Naive thymus-derived CD4-positive, alpha-beta T cell (primary cell): ENCODE measurements at regions of chr12 and their contacts with region 1.

Region 1: GRCh38 chr12:105107494-105108371 is at the start of gene WASHC4:
- DNase-seq: peak; percentile 87 to 97 (median 90)
- ATAC-seq: peak; percentile 99
- H3K4me3 ChIP-seq: peak within 1 kb of the TSS; percentile 68
- H3K4me3 Mint-ChIP-seq: peak within 1 kb of the TSS; percentile 89 to 99 (median 96)
- H3K27ac ChIP-seq: peak within 1 kb of the TSS; percentile 93
- H3K27ac Mint-ChIP-seq: peak within 1 kb of the TSS; percentile 77 to 96 (median 95)
- H3K4me1 ChIP-seq: peaks cover 13 to 16% of the 10 kb centered on the region in 2 donors
- H3K4me1 Mint-ChIP-seq: peaks cover 20 to 45% (median 38%) of the 10 kb centered on the region in 7 donors
- H3K27me3 ChIP-seq: no peaks in the 10 kb centered on the region
- H3K27me3 Mint-ChIP-seq: peaks cover 3 to 27% (median 22%) of the 10 kb centered on the region in 5 donors
- total RNA-seq, gene WASHC4: 43.2 to 76.8 (median 53.0) TPM

Region 2: GRCh38 chr12:103956516-103957027 is 1151.2 kb before region 1 on chr12:
- CTCF ChIA-PET with region 1: no interaction called
- POLR2A ChIA-PET with region 1: no interaction called
- intact Hi-C with region 1: loop called in 1 of 2 experiments (anchors 2 kb)
- DNase-seq: peak in 3 of 9 donors; percentile 4 to 7 (median 5)
- ATAC-seq: no peak
- H3K4me3 ChIP-seq: peak overlapping the region; percentile 91
- H3K4me3 Mint-ChIP-seq: peak overlapping the region; percentile 95 to 100 (median 99)
- H3K27ac ChIP-seq: peak overlapping the region; percentile 73
- H3K27ac Mint-ChIP-seq: peak overlapping the region; percentile 93 to 99 (median 98)
- H3K4me1 ChIP-seq: peaks cover 13 to 17% of the 10 kb centered on the region in 2 donors
- H3K4me1 Mint-ChIP-seq: peaks cover 25 to 58% (median 43%) of the 10 kb centered on the region in 7 donors
- H3K27me3 ChIP-seq: no peaks in the 10 kb centered on the region
- H3K27me3 Mint-ChIP-seq: no peaks in the 10 kb centered on the region

Region 3: GRCh38 chr12:104215638-104216297 is 892.0 kb before region 1 on chr12 and contains the start of gene TXNRD1:
- CTCF ChIA-PET with region 1: no interaction called
- POLR2A ChIA-PET with region 1: no interaction called
- intact Hi-C with region 1: loop called in 1 of 2 experiments (anchors 5 kb)
- DNase-seq: peak; percentile 70 to 84 (median 81)
- ATAC-seq: peak; percentile 97
- H3K4me3 ChIP-seq: peak within 1 kb of the TSS; percentile 69
- H3K4me3 Mint-ChIP-seq: peak within 1 kb of the TSS; percentile 79 to 89 (median 84)
- H3K27ac ChIP-seq: peak within 1 kb of the TSS; percentile 64
- H3K27ac Mint-ChIP-seq: peak within 1 kb of the TSS; percentile 64 to 86 (median 72)
- H3K4me1 ChIP-seq: peaks cover 0 to 5% of the 10 kb centered on the region in 2 donors
- H3K4me1 Mint-ChIP-seq: peaks cover 15 to 41% (median 26%) of the 10 kb centered on the region in 7 donors
- H3K27me3 ChIP-seq: no peaks in the 10 kb centered on the region
- H3K27me3 Mint-ChIP-seq: peaks cover 0 to 8% (median 0%) of the 10 kb centered on the region in 5 donors
- total RNA-seq, gene TXNRD1: 19.1 to 73.5 (median 41.7) TPM

Region 4: GRCh38 chr12:104462931-104463339 is 644.8 kb before region 1 on chr12:
- CTCF ChIA-PET with region 1: no interaction called
- POLR2A ChIA-PET with region 1: interaction called, 6 read pairs
- intact Hi-C with region 1: loop called (anchors 5 kb)
- DNase-seq: peak in 7 of 9 donors; percentile 41 to 68 (median 51)
- ATAC-seq: peak; percentile 71
- H3K4me3 ChIP-seq: peak overlapping the region; percentile 12
- H3K4me3 Mint-ChIP-seq: peak overlapping the region; percentile 68 to 90 (median 85)
- H3K27ac ChIP-seq: peak overlapping the region; percentile 68
- H3K27ac Mint-ChIP-seq: peak overlapping the region; percentile 63 to 98 (median 93)
- H3K4me1 ChIP-seq: peaks cover 76 to 77% of the 10 kb centered on the region in 2 donors
- H3K4me1 Mint-ChIP-seq: peaks cover 60 to 93% (median 78%) of the 10 kb centered on the region in 7 donors
- H3K27me3 ChIP-seq: no peaks in the 10 kb centered on the region
- H3K27me3 Mint-ChIP-seq: no peaks in the 10 kb centered on the region

Region 5: GRCh38 chr12:104958009-104958945 is 149.5 kb before region 1 on chr12 and contains the start of gene SLC41A2:
- CTCF ChIA-PET with region 1: no interaction called
- POLR2A ChIA-PET with region 1: no interaction called
- intact Hi-C with region 1: loop called in 1 of 2 experiments (anchors 1 kb)
- DNase-seq: peak; percentile 55 to 87 (median 74)
- ATAC-seq: peak; percentile 93
- H3K4me3 ChIP-seq: peak within 1 kb of the TSS; percentile 77
- H3K4me3 Mint-ChIP-seq: peak within 1 kb of the TSS; percentile 91 to 98 (median 96)
- H3K27ac ChIP-seq: peak within 1 kb of the TSS; percentile 59
- H3K27ac Mint-ChIP-seq: peak within 1 kb of the TSS; percentile 65 to 93 (median 89)
- H3K4me1 ChIP-seq: peaks cover 6 to 9% of the 10 kb centered on the region in 2 donors
- H3K4me1 Mint-ChIP-seq: peaks cover 8 to 29% (median 26%) of the 10 kb centered on the region in 7 donors
- H3K27me3 ChIP-seq: peaks cover 0 to 3% of the 10 kb centered on the region in 2 donors
- H3K27me3 Mint-ChIP-seq: peaks cover 5 to 49% (median 7%) of the 10 kb centered on the region in 5 donors
- total RNA-seq, gene SLC41A2: 2.0 to 12.7 (median 2.6) TPM

Region 6: GRCh38 chr12:105141320-105141918 is 33.7 kb after region 1 on chr12:
- CTCF ChIA-PET with region 1: no interaction called
- POLR2A ChIA-PET with region 1: no interaction called
- intact Hi-C with region 1: no loop called
- DNase-seq: no peak
- ATAC-seq: no peak
- H3K4me3 ChIP-seq: no peak overlapping the region
- H3K4me3 Mint-ChIP-seq: no peak overlapping the region
- H3K27ac ChIP-seq: no peak overlapping the region
- H3K27ac Mint-ChIP-seq: no peak overlapping the region
- H3K4me1 ChIP-seq: no peaks in the 10 kb centered on the region
- H3K4me1 Mint-ChIP-seq: peaks cover 3 to 20% (median 9%) of the 10 kb centered on the region in 7 donors
- H3K27me3 ChIP-seq: no peaks in the 10 kb centered on the region
- H3K27me3 Mint-ChIP-seq: no peaks in the 10 kb centered on the region

Region 7: DNA sequence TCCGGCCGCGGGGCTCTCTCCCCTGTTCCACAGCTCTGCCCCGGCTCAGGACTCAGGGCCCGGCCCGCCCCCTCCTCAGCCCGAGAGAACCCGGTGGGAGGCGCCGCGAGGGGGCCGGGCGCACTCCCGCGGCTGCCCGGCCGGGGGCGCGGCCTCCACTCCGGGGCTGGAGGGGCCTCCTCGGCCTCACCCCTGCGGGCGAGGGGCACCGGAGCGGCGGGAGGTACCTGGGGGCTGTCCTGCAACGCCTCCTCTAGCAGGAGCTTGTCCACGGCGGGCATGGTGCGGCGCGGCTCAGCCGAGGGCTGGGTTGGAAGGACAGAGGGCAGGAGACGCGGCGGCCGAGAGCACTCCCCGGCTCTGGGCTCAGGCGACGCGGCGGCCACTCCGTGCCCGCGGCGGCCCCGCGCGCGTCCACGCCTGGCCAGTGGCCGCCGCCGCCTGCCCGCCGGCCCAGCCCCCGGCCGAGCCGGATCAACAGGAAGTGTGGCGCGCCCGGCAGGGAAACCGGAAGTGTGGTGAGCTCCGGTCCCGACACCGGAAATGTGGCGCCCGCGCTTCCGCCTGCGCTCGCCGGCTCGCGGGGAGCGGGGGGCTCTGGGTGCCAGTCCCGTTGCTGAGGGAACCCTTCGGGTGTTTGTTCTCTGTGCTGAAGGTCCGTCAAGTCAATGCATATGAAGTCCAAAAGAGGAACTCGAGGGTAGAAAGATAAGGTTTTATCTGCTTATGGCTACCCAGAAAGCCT is 128.2 kb after region 1 on chr12 and contains the start of gene APPL2:
- CTCF ChIA-PET with region 1: no interaction called
- POLR2A ChIA-PET with region 1: interaction called, 3 read pairs
- intact Hi-C with region 1: loop called (anchors 1 to 2 kb)
- DNase-seq: peak; percentile 52 to 81 (median 71)
- ATAC-seq: peak; percentile 86
- H3K4me3 ChIP-seq: peak within 1 kb of the TSS; percentile 71
- H3K4me3 Mint-ChIP-seq: peak within 1 kb of the TSS in 9 of 10 donors; percentile 89 to 95 (median 93)
- H3K27ac ChIP-seq: peak within 1 kb of the TSS; percentile 78
- H3K27ac Mint-ChIP-seq: peak within 1 kb of the TSS; percentile 86 to 96 (median 91)
- H3K4me1 ChIP-seq: peaks cover 25 to 39% of the 10 kb centered on the region in 2 donors
- H3K4me1 Mint-ChIP-seq: peaks cover 42 to 54% (median 48%) of the 10 kb centered on the region in 7 donors
- H3K27me3 ChIP-seq: no peaks in the 10 kb centered on the region
- H3K27me3 Mint-ChIP-seq: peaks cover 0 to 3% (median 0%) of the 10 kb centered on the region in 5 donors
- total RNA-seq, gene APPL2: 31.6 to 74.5 (median 58.3) TPM

Region 8: DNA sequence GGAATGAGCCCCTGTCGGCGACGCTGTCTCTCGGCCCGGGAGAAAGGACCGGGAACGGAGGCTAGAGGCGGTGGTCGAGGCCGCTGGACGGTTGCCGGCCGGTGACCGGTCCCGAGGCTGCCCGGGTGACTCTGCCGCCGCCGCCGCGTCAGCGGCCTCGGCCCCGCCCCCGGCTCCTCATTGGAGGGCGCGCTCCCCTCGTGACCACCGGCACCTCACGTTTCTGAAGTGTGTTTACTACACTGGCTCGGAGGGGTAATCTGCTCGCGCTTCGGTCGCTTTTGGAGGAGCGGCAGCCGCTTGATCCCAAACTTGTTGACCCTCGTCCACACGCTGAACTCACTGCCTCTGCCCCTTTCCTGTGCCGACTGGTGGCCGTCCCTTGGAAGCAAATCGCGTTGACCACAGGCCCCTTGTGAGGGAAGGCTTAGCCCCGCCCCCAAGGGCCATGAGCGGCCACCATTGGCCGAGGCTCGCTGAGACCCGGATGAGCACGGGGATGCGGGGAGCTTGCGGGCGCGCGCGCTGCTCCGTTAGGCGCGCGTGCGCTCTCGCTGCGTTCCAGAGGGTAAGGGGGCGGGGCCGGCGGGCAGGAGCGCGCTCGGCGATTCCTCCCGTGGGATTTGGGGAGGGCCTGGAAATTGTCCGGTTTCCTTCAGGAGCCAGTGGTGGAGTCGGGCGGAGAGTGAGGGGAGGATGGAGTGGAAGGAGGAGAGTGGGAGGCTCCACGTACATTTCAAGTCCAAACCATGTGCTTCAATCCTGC is 1985.9 kb after region 1 on chr12 and contains the start of gene CRY1:
- CTCF ChIA-PET with region 1: no interaction called
- POLR2A ChIA-PET with region 1: no interaction called
- intact Hi-C with region 1: loop called in 1 of 2 experiments (anchors 10 kb)
- DNase-seq: peak; percentile 87 to 98 (median 94)
- ATAC-seq: peak; percentile 90
- H3K4me3 ChIP-seq: peak within 1 kb of the TSS; percentile 85
- H3K4me3 Mint-ChIP-seq: no peak within 1 kb of the TSS
- H3K27ac ChIP-seq: peak within 1 kb of the TSS; percentile 99
- H3K27ac Mint-ChIP-seq: no peak within 1 kb of the TSS
- H3K4me1 ChIP-seq: peaks cover 16 to 18% of the 10 kb centered on the region in 2 donors
- H3K4me1 Mint-ChIP-seq: peaks cover 5 to 18% (median 11%) of the 10 kb centered on the region in 7 donors
- H3K27me3 ChIP-seq: no peaks in the 10 kb centered on the region
- H3K27me3 Mint-ChIP-seq: peaks cover 0 to 11% (median 5%) of the 10 kb centered on the region in 5 donors
- total RNA-seq, gene CRY1: 8.0 to 58.4 (median 33.4) TPM